Caco-2 (cell line): ENCODE measurements at regions of chr20 and their contacts with region 1.

Region 1: GRCh38 chr20:17504898-17505635 is 26.1 kb downstream of the BFSP1 start:
- DNase-seq: peak in 1 of 2 experiments; percentile 53
- H3K4me3 ChIP-seq: peak overlapping the region; percentile 37
- H3K4me3 Mint-ChIP-seq: peak overlapping the region; percentile 75
- H3K27ac Mint-ChIP-seq: peak overlapping the region; percentile 58
- H3K4me1 ChIP-seq: peaks cover 12% of the 10 kb centered on the region; the same call in 1 of the 2 replicates
- H3K4me1 Mint-ChIP-seq: peaks cover 18% of the 10 kb centered on the region
- H3K27me3 ChIP-seq: no peaks in the 10 kb centered on the region
- H3K27me3 Mint-ChIP-seq: no peaks in the 10 kb centered on the region
- CTCF ChIP-seq: peak; percentile 54 to 70

Region 2: DNA sequence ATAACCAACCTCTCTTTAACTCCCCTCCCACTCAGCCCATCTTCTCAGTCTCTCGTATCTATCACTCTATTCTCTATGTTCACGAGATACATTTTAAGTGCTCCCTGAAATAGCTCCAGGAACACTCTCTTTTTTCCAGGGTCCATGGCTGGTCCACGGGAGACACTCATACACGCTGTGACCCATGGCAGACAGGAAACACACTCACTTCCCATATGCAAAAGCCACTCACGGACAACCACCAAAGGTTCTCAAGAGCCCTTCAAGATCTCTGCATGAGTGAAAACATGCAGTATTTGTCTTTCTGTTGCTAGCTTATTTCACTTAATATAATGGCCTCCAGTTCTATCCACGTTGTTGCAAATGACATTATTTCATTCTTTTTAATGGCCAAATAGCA is 349.7 kb before region 1 on chr20:
- CTCF ChIA-PET with region 1: no interaction called
- POLR2A ChIA-PET with region 1: no interaction called
- intact Hi-C with region 1: no loop called
- DNase-seq: no peak
- H3K4me3 ChIP-seq: no peak overlapping the region
- H3K4me3 Mint-ChIP-seq: no peak overlapping the region
- H3K27ac Mint-ChIP-seq: no peak overlapping the region
- H3K4me1 ChIP-seq: no peaks in the 10 kb centered on the region
- H3K4me1 Mint-ChIP-seq: no peaks in the 10 kb centered on the region
- H3K27me3 ChIP-seq: no peaks in the 10 kb centered on the region
- H3K27me3 Mint-ChIP-seq: peaks cover 13% of the 10 kb centered on the region
- CTCF ChIP-seq: no peak

Region 3: GRCh38 chr20:17518339-17519052 is 13.4 kb after region 1 on chr20:
- CTCF ChIA-PET with region 1: interaction called, 9 read pairs
- POLR2A ChIA-PET with region 1: no interaction called
- intact Hi-C with region 1: loop called (anchors 2 kb)
- DNase-seq: peak; percentile 45 to 70
- H3K4me3 ChIP-seq: no peak overlapping the region
- H3K4me3 Mint-ChIP-seq: no peak overlapping the region
- H3K27ac Mint-ChIP-seq: no peak overlapping the region
- H3K4me1 ChIP-seq: peaks cover 67% of the 10 kb centered on the region
- H3K4me1 Mint-ChIP-seq: peaks cover 33% of the 10 kb centered on the region
- H3K27me3 ChIP-seq: no peaks in the 10 kb centered on the region
- H3K27me3 Mint-ChIP-seq: no peaks in the 10 kb centered on the region
- CTCF ChIP-seq: no peak

Region 4: GRCh38 chr20:17530716-17531664 is 25.9 kb after region 1 on chr20 and contains the start of gene BFSP1:
- CTCF ChIA-PET with region 1: interaction called, 7 read pairs
- POLR2A ChIA-PET with region 1: no interaction called
- intact Hi-C with region 1: loop called (anchors 1 kb)
- DNase-seq: peak; percentile 63 to 77
- H3K4me3 ChIP-seq: peak within 1 kb of the TSS; percentile 81
- H3K4me3 Mint-ChIP-seq: peak within 1 kb of the TSS; percentile 88
- H3K27ac Mint-ChIP-seq: peak within 1 kb of the TSS; percentile 84
- H3K4me1 ChIP-seq: peaks cover 5% of the 10 kb centered on the region; the same call in 1 of the 2 replicates
- H3K4me1 Mint-ChIP-seq: peaks cover 13% of the 10 kb centered on the region
- H3K27me3 ChIP-seq: no peaks in the 10 kb centered on the region
- H3K27me3 Mint-ChIP-seq: no peaks in the 10 kb centered on the region
- CTCF ChIP-seq: no peak
- total RNA-seq, gene BFSP1: 20.4 and 22.7 TPM in 2 replicates

Region 5: DNA sequence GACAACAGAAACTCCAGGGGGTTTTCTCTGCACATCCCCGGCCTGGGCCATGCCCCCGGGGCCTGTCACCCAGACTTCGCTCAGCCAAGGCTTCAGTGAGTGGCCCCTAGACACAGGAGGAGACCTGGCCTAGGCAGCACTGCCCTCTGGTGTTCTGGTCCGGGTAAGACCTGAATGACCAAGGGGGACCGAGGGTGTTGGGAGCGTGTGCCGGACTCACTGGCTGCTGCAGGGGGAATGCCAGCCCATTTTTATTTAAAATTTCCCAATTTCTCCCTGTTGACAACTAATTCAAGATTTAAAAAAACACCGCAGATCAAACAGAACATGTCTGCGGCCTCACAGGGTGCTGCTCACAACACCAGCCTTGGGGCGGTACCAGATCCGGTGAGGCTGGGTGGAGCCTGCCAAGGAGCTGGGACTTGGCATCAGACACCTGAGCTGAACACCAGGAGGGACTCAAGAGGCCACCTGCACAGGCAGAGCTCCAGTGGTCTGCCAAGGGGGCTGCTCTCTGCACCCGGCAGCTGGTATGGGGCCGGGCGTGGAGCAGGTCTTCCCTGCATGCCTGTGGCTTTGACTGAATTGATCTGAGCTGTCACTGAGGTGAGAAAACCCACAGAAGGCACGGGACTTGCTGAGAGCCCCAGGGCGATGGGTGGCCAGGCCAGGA is 112.6 kb after region 1 on chr20:
- CTCF ChIA-PET with region 1: no interaction called
- POLR2A ChIA-PET with region 1: no interaction called
- intact Hi-C with region 1: loop called (anchors 1 kb)
- DNase-seq: peak; percentile 69 to 73
- H3K4me3 ChIP-seq: no peak overlapping the region
- H3K4me3 Mint-ChIP-seq: no peak overlapping the region
- H3K27ac Mint-ChIP-seq: peak overlapping the region; percentile 60
- H3K4me1 ChIP-seq: 0 out of 2 replicates have a peak, but pooled peaks cover 6% of the 10 kb centered on the region
- H3K4me1 Mint-ChIP-seq: peaks cover 5% of the 10 kb centered on the region
- H3K27me3 ChIP-seq: no peaks in the 10 kb centered on the region
- H3K27me3 Mint-ChIP-seq: no peaks in the 10 kb centered on the region
- CTCF ChIP-seq: peak; percentile 45 to 68

Region 6: GRCh38 chr20:17898548-17898994 is 393.5 kb after region 1 on chr20:
- CTCF ChIA-PET with region 1: no interaction called
- POLR2A ChIA-PET with region 1: no interaction called
- intact Hi-C with region 1: loop called (anchors 10 kb)
- DNase-seq: peak; percentile 71 to 81
- H3K4me3 ChIP-seq: no peak overlapping the region
- H3K4me3 Mint-ChIP-seq: no peak overlapping the region
- H3K27ac Mint-ChIP-seq: peak overlapping the region; percentile 29
- H3K4me1 ChIP-seq: peaks cover 4% of the 10 kb centered on the region; the same call in 1 of the 2 replicates
- H3K4me1 Mint-ChIP-seq: peaks cover 4% of the 10 kb centered on the region
- H3K27me3 ChIP-seq: no peaks in the 10 kb centered on the region
- H3K27me3 Mint-ChIP-seq: no peaks in the 10 kb centered on the region
- CTCF ChIP-seq: peak; percentile 85 to 97

Region 7: DNA sequence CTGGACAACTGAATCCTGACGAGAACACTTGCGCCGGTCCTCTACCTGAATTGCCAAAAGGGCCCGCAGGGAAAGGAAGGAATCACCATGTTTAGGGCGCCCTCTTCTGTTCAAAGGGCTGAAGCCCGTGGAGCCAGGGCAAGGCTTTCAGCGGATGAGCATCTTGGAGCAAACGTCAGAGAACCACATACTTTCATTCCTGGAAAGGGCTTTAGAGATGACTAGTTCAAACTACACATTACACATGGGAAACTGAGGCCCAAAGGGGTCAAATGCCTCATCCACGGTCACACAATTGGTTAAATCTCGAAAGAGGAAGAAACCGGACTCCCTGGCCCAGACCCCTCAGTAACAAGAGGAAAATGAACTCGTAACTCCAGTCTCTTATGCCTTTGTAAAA is 771.8 kb after region 1 on chr20:
- CTCF ChIA-PET with region 1: no interaction called
- POLR2A ChIA-PET with region 1: no interaction called
- intact Hi-C with region 1: loop called (anchors 5 kb)
- DNase-seq: peak; percentile 85 to 88
- H3K4me3 ChIP-seq: no peak overlapping the region
- H3K4me3 Mint-ChIP-seq: no peak overlapping the region
- H3K27ac Mint-ChIP-seq: no peak overlapping the region
- H3K4me1 ChIP-seq: no peaks in the 10 kb centered on the region
- H3K4me1 Mint-ChIP-seq: peaks cover 8% of the 10 kb centered on the region
- H3K27me3 ChIP-seq: no peaks in the 10 kb centered on the region
- H3K27me3 Mint-ChIP-seq: peaks cover 6% of the 10 kb centered on the region
- CTCF ChIP-seq: peak; percentile 86 to 94